ENCODE measurements at regions of chr10 and their contacts with region 1.

Region 1: DNA sequence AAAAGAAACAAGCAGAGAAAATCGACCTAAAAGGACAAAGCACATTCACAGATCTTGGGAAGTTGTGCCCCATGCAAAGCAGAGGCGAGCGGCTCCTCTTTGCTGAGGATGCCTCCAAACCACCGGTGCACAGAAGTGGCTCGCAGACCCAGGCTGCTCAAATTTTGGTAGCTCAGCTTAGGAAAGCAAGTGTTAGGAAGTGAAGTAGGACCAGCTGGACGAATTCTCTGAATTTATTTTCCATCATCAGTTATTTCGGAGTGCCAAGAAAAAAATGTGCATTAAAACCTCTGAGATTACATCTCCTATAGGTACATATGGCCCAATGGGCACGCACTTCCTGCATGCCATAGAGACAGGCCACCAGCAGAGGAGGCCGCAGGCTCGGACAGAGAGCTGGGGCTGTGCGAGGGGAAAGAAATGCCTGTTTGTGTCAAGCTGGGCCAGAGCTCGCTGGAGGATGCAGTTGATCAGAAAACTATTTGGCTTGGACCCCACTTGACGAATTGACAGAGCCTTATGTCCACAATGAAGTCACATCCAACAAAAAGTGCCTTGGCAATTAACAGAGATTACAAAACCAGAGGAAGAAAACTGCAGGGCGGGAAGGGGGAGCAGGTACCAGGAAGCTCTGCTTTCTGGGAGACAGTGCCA is 122.3 kb upstream of the LYZL2 start:
- DNase-seq: peak; percentile 53 to 94 (median 85)

Region 2: DNA sequence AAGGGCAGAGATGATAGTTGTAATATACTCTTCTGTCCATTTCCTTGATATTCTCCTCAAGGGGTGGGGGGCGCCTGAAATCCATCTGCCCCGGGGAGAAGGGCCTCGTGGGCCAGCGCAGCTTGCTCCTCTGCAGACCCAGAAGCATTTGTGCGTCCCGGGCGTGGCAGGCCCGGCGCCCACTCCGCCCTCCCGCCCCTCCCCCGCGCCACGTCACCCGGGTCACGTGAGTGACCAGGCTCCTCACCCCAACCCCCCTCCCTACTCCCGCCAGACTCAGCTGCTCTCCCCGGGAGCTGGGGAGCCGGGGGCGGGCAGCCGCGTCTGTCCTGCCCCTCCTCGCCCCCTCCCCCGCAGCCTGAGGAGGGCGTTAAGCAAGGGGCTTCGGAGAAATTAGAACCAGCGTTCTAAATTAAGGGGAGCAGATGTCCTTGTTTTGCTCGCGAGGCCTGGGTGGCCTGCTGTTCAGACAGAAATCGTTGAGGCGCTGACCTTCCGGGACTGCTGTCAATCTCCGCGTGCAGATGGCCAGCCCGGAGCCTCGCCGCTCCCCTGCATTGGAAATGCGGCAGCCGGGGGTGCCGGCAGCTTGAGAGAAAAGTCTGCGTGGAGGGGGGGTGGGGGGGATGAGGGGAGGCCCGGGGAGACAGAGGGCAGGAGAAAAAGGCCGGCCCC is 382.0 kb after region 1 on chr10:
- intact Hi-C with region 1: loop called (anchors 10 kb)
- DNase-seq: peak; percentile 65 to 94 (median 86)

Measured in head of caudate nucleus (tissue), 42 donors.